ENCODE measurements at regions of chr2 and their contacts with region 1.

Region 1: DNA sequence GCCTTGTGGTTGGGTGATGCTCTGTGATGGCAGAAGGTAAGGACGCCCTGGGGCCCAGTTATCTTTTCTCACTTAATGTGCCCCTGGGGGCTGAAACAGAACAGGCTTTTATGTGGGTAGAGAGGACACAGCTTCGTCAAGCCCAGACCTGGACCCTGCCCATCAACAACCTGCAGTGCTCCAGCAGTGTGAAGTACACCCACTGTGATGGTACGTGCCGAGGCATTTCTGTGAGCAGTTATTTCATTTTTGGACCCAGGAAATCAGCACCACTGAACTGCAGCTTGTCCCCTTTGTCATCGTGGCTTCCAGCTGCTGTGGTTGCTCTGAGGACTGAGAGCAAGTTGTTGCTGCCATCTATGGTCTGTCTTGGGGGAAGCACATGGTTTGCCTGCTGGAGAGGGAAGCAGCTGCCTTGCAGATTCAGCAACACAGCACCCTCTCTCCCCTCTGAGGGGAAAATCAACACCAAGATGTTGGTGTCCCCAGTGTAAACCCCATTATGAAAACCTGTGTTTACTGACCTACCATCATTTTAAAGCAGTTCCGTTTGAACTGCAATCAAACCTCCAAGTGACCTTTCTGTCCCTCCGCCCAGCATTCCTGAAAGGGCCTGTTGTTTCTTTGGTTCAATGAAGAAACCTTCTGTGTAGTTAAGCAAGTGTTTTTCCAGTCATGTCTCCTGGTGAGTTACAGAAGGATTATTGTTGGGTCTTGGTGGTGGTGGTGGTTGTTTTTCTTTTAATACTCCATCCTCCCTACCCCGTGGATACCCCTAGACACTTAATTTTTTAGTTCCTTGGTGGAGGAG is 158.2 kb downstream of the MGAT5 start:
- DNase-seq: peak; percentile 89
- H3K4me3 ChIP-seq: no peak overlapping the region
- H3K27ac ChIP-seq: peak overlapping the region; percentile 10 to 74 (median 58)
- H3K4me1 ChIP-seq: peaks cover 7 to 53% (median 40%) of the 10 kb centered on the region in 6 donors
- H3K27me3 ChIP-seq: no peaks in the 10 kb centered on the region
- CTCF ChIP-seq: peak; percentile 44 to 80 (median 68)
- POLR2A ChIP-seq: no peak

Region 2: GRCh38 chr2:134245340-134245984 is 166.6 kb before region 1 on chr2:
- intact Hi-C with region 1: loop called (anchors 5 kb)
- DNase-seq: peak; percentile 87
- H3K4me3 ChIP-seq: peak overlapping the region in 1 of 8 donors; percentile 35
- H3K27ac ChIP-seq: peak overlapping the region in 6 of 8 donors; percentile 10 to 86 (median 66)
- H3K4me1 ChIP-seq: peaks cover 39 to 100% (median 83%) of the 10 kb centered on the region in 6 donors
- H3K27me3 ChIP-seq: no peaks in the 10 kb centered on the region
- CTCF ChIP-seq: peak; percentile 73 to 91 (median 84)
- POLR2A ChIP-seq: no peak

Region 3: DNA sequence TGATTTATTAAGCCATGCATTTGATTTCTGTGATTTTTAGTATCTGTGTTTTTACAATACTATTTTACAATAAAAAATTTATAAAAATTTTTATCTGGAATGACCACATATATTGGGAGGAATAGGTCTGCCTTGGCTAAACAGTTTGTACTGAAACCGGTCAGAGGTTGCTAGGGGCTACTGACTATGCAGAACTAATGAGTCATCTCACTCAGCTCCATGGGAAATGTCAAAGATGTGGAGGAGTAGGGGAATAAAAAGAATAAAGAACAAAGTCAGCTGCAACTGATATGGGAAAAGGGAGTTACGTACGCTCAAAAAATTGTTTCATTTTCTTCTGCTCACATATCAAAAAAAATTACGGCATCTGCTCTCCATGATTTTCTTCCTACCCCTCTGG is 315.4 kb after region 1 on chr2:
- intact Hi-C with region 1: no loop called
- DNase-seq: no peak
- H3K4me3 ChIP-seq: no peak overlapping the region
- H3K27ac ChIP-seq: no peak overlapping the region
- H3K4me1 ChIP-seq: no peaks in the 10 kb centered on the region
- H3K27me3 ChIP-seq: peaks cover 0 to 3% (median 0%) of the 10 kb centered on the region in 7 donors
- CTCF ChIP-seq: no peak
- POLR2A ChIP-seq: no peak

Measured in spleen (tissue), 13 donors.